ENCODE measurements at regions of chr4 and their contacts with region 1.

Region 1: GRCh38 chr4:185192059-185192458 is 11.7 kb downstream of the CFAP97 start:
- DNase-seq: no peak
- H3K4me3 ChIP-seq: no peak overlapping the region
- H3K27ac ChIP-seq: no peak overlapping the region
- H3K4me1 ChIP-seq: no peaks in the 10 kb centered on the region
- H3K27me3 ChIP-seq: no peaks in the 10 kb centered on the region
- CTCF ChIP-seq: no peak
- EP300 ChIP-seq: no peak
- POLR2A ChIP-seq: no peak

Region 2: GRCh38 chr4:185142912-185143595 is 49.0 kb before region 1 on chr4 and contains the start of gene SLC25A4:
- intact Hi-C with region 1: loop called in 1 of 4 experiments (anchors 10 kb)
- DNase-seq: peak; percentile 86 to 92 (median 89)
- H3K4me3 ChIP-seq: peak within 1 kb of the TSS; percentile 76
- H3K27ac ChIP-seq: peak within 1 kb of the TSS; percentile 25 to 36
- H3K4me1 ChIP-seq: peaks cover 4% of the 10 kb centered on the region
- H3K27me3 ChIP-seq: no peaks in the 10 kb centered on the region
- CTCF ChIP-seq: peak; percentile 44 to 90 (median 78)
- EP300 ChIP-seq: no peak
- POLR2A ChIP-seq: peak; percentile 84
- total RNA-seq, gene SLC25A4: 19.6 to 35.6 (median 26.6) TPM

Region 3: DNA sequence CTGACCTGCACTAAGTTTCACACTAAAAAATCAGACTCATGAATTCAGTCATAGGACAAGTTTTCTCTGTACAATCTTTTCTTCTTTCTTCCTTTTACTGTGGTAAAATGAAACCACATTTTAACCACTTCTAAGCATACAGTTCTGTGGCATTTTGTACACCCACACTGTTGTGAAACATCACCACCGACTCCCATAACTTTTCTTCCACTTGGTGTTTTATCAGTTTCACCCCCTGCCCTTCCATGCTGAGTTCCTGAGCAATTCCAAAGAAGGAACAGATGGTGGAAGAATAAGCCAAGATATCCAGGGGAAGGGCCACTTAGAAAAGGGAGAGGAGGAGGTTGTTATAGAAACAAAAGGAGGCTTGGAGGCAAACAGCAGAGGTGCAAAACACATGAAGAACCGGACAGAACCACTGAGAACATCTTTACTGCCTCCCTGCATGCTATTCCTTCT is 26.4 kb before region 1 on chr4:
- intact Hi-C with region 1: no loop called
- DNase-seq: peak in 1 of 5 donors; percentile 33
- H3K4me3 ChIP-seq: no peak overlapping the region
- H3K27ac ChIP-seq: no peak overlapping the region
- H3K4me1 ChIP-seq: peaks cover 4% of the 10 kb centered on the region
- H3K27me3 ChIP-seq: no peaks in the 10 kb centered on the region
- CTCF ChIP-seq: no peak
- EP300 ChIP-seq: no peak
- POLR2A ChIP-seq: no peak

Measured in ovary (tissue), 10 donors.